IMR-90 (cell line): ENCODE measurements at regions of chr1 and their contacts with region 1.

Region 1: GRCh38 chr1:151693076-151693651 is 23.4 kb downstream of the CELF3 start:
- DNase-seq: peak; percentile 47
- ATAC-seq: peak; percentile 67
- H3K4me3 ChIP-seq: no peak overlapping the region
- H3K27ac ChIP-seq: no peak overlapping the region
- H3K4me1 ChIP-seq: no peaks in the 10 kb centered on the region
- H3K27me3 ChIP-seq: no peaks in the 10 kb centered on the region
- CTCF ChIP-seq: peak; percentile 68
- POLR2A ChIP-seq: no peak
- RAD21 ChIP-seq: peak; percentile 73

Region 2: DNA sequence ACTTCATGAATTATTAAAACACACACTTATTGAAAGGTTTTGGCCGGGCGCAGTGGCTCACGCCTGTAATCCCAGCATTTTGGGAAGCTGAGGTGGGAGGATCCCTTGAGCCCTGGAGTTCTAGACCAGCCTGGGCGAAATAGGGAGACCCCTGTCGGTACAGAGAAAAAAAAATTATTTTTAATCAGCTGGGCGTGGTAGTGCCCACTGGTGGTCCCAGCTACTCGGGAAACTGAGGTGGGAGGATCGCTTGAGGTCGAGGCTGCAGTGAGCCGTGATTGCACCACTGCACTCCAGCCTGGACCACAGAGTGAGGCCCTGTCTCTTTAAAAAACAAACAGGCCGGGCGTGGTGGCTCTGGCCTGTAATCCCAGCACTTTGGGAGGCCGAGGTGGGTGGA is 620.9 kb before region 1 on chr1:
- CTCF ChIA-PET with region 1: no interaction called
- POLR2A ChIA-PET with region 1: no interaction called
- dilution Hi-C with region 1: no loop called
- in situ Hi-C with region 1: no loop called
- intact Hi-C with region 1: no loop called
- DNase-seq: no peak
- ATAC-seq: no peak
- H3K4me3 ChIP-seq: no peak overlapping the region
- H3K27ac ChIP-seq: no peak overlapping the region
- H3K4me1 ChIP-seq: no peaks in the 10 kb centered on the region
- H3K27me3 ChIP-seq: no peaks in the 10 kb centered on the region
- CTCF ChIP-seq: no peak
- POLR2A ChIP-seq: no peak
- RAD21 ChIP-seq: no peak

Region 3: DNA sequence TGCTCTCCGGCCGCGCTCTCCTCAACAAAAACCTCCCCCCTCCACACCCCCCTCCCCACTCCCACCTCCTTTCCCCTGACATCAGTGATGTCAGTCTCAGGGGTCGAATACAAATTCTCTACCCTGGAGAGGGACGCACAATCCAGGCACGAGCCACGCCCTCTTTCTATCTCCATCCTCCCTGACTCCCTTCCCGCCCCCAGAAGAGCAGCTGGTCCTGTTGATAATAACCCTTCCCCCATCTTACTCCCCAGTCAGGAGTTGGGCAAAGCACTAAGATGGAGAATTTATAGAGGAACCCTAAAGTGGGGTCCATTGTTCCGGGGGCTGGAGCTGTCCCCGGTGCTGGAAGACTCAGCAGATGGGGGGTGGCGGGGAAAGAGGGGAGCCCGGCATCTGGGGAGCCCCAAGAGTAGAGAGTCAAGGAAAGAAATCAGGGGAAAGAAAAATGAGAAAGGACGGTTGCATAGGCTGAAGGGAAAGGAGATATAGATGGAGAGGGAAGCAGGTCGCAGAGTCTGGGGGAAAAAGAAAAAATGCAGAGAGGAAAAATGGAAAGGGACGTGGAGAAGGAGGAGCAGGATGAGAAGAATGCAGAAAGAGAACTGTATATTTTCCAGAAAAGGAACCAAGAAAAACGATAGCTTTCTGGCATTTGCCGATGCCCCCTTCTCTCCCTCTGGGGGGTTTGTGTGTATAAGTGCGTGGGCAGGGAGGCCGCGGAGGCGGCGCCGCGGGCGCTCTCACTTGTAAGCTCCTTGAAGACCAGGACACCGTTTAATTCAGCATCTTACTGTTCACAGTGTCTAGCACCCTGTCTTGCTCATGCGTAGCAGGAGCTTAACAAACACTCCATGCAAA is 23.8 kb after region 1 on chr1 and contains the start of gene CELF3:
- CTCF ChIA-PET with region 1: no interaction called
- POLR2A ChIA-PET with region 1: no interaction called
- dilution Hi-C with region 1: no loop called
- in situ Hi-C with region 1: no loop called
- intact Hi-C with region 1: loop called (anchors 2 kb)
- DNase-seq: no peak
- ATAC-seq: peak; percentile 30; the same call in 1 of the 2 replicates
- H3K4me3 ChIP-seq: no peak within 1 kb of the TSS
- H3K27ac ChIP-seq: no peak within 1 kb of the TSS
- H3K4me1 ChIP-seq: peaks cover 2% of the 10 kb centered on the region; the same call in 1 of the 2 replicates
- H3K27me3 ChIP-seq: peaks cover 79% of the 10 kb centered on the region
- CTCF ChIP-seq: no peak
- POLR2A ChIP-seq: no peak
- RAD21 ChIP-seq: no peak
- total RNA-seq, gene CELF3: not detected in 2 replicates

Region 4: GRCh38 chr1:152917794-152918193 is 1224.6 kb after region 1 on chr1:
- CTCF ChIA-PET with region 1: no interaction called
- POLR2A ChIA-PET with region 1: no interaction called
- dilution Hi-C with region 1: no loop called
- in situ Hi-C with region 1: no loop called
- intact Hi-C with region 1: no loop called
- DNase-seq: peak; percentile 1
- ATAC-seq: no peak
- H3K4me3 ChIP-seq: no peak overlapping the region
- H3K27ac ChIP-seq: no peak overlapping the region
- H3K4me1 ChIP-seq: no peaks in the 10 kb centered on the region
- H3K27me3 ChIP-seq: no peaks in the 10 kb centered on the region
- CTCF ChIP-seq: peak; percentile 21; the same call in 1 of the 2 replicates
- POLR2A ChIP-seq: no peak
- RAD21 ChIP-seq: peak; percentile 33; the same call in 1 of the 2 replicates